ENCODE measurements at regions of chr12 and their contacts with region 1.

Region 1: GRCh38 chr12:93467351-93468007 is at the start of gene MRPL42:
- DNase-seq: peak; percentile 85
- CTCF ChIP-seq: peak; percentile 68

Region 2: GRCh38 chr12:93205361-93205760 is 262.1 kb before region 1 on chr12:
- CTCF ChIA-PET with region 1: no interaction called
- POLR2A ChIA-PET with region 1: no interaction called
- DNase-seq: no peak
- CTCF ChIP-seq: no peak

Region 3: GRCh38 chr12:93484315-93484981 is 17.0 kb after region 1 on chr12:
- CTCF ChIA-PET with region 1: interaction called, 10 read pairs
- POLR2A ChIA-PET with region 1: no interaction called
- DNase-seq: no peak
- CTCF ChIP-seq: no peak

Measured in GM10248 (cell line).